Pancreas (tissue), 10 donors: ENCODE measurements at regions of chr1 and their contacts with region 1.

Region 1: DNA sequence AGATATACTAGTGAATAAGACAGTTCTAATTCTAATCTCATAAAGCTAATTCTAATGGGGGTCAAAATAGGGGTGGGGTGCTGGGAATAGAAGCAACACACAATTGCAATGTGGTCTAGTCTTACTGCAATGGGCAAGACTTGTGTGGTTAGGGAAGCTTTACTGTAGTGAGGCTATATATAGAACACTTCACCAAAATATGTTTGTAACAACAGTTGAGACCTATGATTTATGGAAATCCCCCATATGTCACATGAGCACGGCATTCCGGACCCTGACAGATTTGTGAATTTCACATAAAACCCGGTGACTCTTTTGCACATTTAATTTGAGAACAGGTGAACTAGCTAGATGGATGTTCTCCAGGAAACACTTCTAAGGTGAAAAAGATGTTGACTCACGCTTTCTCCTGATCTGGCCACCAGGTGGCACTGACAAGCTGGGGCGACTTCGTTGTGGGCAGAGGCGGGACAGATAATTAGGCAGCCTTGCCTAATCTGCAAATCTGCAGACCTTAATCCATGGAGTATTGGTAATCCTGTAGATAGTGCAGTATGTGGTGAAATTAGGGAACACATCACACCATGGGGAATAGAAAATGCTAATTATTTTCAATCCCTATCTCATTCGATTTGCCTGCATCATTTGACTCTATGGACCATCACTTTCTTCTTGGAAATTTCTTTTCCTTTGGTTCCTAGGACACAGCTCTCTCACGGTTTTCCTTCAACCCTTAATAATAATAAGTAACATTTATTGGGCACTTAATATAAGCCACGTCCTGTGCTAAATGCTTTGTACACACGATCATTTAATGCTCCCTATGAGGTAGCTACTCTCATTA is 37.7 kb downstream of the KIAA0040 start:
- DNase-seq: peak; percentile 54 to 90 (median 76)
- ATAC-seq: peak; percentile 58 to 84 (median 80)
- H3K4me3 ChIP-seq: no peak overlapping the region
- H3K27ac ChIP-seq: no peak overlapping the region
- H3K4me1 ChIP-seq: peaks cover 0 to 4% (median 0%) of the 10 kb centered on the region in 3 donors
- H3K27me3 ChIP-seq: no peaks in the 10 kb centered on the region
- CTCF ChIP-seq: peak; percentile 67 to 88 (median 74)

Region 2: DNA sequence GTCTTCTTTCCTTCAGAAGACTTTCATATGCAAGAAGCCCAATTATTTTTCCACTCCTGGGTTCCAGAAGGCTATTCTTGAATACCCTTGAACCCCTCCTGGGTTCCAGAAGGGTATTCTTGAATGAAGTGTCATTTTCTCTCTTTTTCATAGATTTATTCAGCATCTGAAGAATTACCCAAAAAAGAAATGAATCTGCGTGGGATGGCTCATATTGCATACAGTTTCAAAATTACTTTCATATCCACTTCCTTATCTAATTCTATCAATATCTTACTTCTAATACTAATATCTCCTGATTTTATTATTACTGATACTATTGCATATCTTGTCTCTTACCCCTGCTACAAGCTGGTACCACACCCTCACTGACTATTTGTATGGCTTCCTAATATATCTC is 1018.1 kb before region 1 on chr1:
- intact Hi-C with region 1: no loop called
- DNase-seq: no peak
- ATAC-seq: no peak
- H3K4me3 ChIP-seq: no peak overlapping the region
- H3K27ac ChIP-seq: no peak overlapping the region
- H3K4me1 ChIP-seq: no peaks in the 10 kb centered on the region
- H3K27me3 ChIP-seq: no peaks in the 10 kb centered on the region
- CTCF ChIP-seq: no peak

Region 3: GRCh38 chr1:175221666-175222175 is 66.9 kb after region 1 on chr1:
- intact Hi-C with region 1: loop called in 1 of 3 experiments (anchors 5 kb)
- DNase-seq: peak in 5 of 6 donors; percentile 31 to 61 (median 37)
- ATAC-seq: peak; percentile 53 to 99 (median 78)
- H3K4me3 ChIP-seq: no peak overlapping the region
- H3K27ac ChIP-seq: no peak overlapping the region
- H3K4me1 ChIP-seq: no peaks in the 10 kb centered on the region
- H3K27me3 ChIP-seq: no peaks in the 10 kb centered on the region
- CTCF ChIP-seq: no peak

Region 4: DNA sequence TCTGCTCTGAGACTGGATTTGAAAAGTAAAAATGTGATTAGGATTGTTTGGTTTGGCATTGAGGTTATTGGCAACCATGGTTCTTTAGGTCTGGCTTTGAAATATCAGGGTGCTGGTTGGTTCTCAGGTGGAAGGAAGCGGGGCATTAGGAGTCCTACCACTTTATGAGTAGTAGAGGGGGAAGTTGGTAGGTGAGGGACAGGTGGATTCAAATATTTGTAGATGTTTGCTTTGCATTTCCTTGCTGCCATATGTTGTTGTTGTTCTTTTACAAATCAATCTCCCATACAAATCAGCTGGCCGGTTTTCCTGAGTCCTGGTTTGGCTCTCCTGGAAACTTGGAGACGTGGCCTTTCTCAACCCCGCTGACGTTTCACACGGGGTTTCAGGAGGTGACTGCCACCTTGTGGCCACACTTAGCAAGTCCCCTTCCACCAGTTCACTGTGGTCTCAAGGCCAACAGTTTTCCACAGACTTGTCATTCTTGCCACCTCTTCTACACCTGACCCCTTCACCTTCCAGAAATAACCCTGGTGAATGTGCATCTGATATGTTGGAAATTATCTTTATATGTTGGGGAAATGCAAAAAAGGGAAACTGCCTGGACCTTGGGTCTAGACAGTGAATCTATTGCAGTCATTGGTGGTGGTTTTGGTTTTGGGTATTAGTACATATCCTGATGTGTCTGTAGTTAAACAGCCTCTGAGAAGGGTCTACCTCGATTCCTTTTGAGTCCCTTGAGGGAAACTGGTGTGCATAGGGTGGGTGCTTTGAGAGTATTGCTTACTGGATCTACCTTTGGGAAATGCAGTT is 164.8 kb after region 1 on chr1:
- intact Hi-C with region 1: loop called in 2 of 3 experiments (anchors 5 kb)
- DNase-seq: peak; percentile 83 to 91 (median 87)
- ATAC-seq: peak; percentile 79 to 92 (median 90)
- H3K4me3 ChIP-seq: no peak overlapping the region
- H3K27ac ChIP-seq: peak overlapping the region; percentile 66 to 83 (median 80)
- H3K4me1 ChIP-seq: peaks cover 23 to 33% (median 29%) of the 10 kb centered on the region in 3 donors
- H3K27me3 ChIP-seq: no peaks in the 10 kb centered on the region
- CTCF ChIP-seq: peak; percentile 69 to 91 (median 76)

Region 5: GRCh38 chr1:175481126-175482066 is 326.5 kb after region 1 on chr1:
- intact Hi-C with region 1: no loop called
- DNase-seq: no peak
- ATAC-seq: peak; percentile 58 to 90 (median 84)
- H3K4me3 ChIP-seq: no peak overlapping the region
- H3K27ac ChIP-seq: no peak overlapping the region
- H3K4me1 ChIP-seq: no peaks in the 10 kb centered on the region
- H3K27me3 ChIP-seq: no peaks in the 10 kb centered on the region
- CTCF ChIP-seq: peak; percentile 24 to 46 (median 44)